ENCODE measurements at regions of chr10 and their contacts with region 1.

Region 1: DNA sequence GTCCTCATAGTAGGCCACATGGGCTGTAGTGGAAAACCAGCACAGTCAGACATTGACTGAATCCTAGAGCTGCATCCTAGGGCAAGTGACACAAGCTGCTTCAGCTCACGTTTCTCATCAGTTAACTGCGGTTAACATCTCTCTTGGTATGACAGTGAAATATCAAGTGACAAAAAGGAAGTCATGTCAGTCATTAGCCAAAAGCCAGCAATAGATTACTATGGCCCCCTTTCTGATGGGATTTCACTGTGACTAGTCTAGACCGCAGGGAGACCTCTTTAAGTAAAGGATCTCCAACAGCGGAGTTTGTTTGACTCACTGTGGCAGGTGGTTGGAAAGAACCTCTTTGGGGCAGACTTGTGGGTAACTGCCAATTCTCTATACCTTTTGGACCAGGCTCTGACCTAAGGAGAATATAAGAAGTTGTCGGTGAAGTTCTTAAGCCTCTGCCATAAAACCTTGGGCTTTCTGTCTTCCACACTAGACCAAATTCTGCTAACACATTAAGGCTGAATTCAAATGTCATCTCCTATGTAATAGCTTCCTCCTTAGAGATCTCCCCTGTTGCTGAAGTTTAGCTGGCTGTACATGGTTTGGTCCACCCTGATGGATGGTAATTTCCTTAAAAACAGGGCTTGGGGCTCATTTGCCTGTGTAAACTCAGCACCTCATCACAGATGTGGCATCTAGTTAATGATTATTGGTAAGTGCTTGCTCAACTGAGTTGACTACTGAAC is 115.3 kb downstream of the SGMS1 start:
- DNase-seq: peak; percentile 99
- ATAC-seq: peak; percentile 75
- H3K4me3 ChIP-seq: peak overlapping the region; percentile 4; the same call in 1 of the 2 replicates
- H3K27ac ChIP-seq: peak overlapping the region; percentile 80
- H3K4me1 ChIP-seq: peaks cover 68% of the 10 kb centered on the region
- H3K27me3 ChIP-seq: no peaks in the 10 kb centered on the region
- CTCF ChIP-seq: no peak
- EP300 ChIP-seq: peak; percentile 99 to 100
- POLR2A ChIP-seq: no peak
- RAD21 ChIP-seq: peak; percentile 27; the same call in 1 of the 2 replicates

Region 2: GRCh38 chr10:49242604-49243003 is 1265.9 kb before region 1 on chr10:
- CTCF ChIA-PET with region 1: no interaction called
- POLR2A ChIA-PET with region 1: no interaction called
- RAD21 ChIA-PET with region 1: no interaction called
- SMC1A ChIA-PET with region 1: no interaction called
- in situ Hi-C with region 1: no loop called
- intact Hi-C with region 1: no loop called
- DNase-seq: no peak
- ATAC-seq: no peak
- H3K4me3 ChIP-seq: no peak overlapping the region
- H3K27ac ChIP-seq: no peak overlapping the region
- H3K4me1 ChIP-seq: no peaks in the 10 kb centered on the region
- H3K27me3 ChIP-seq: peaks cover 0 to 2% of the 10 kb centered on the region in 2 experiments; a peak in 1 of 4 replicates
- CTCF ChIP-seq: no peak
- EP300 ChIP-seq: no peak
- POLR2A ChIP-seq: no peak
- RAD21 ChIP-seq: no peak

Region 3: DNA sequence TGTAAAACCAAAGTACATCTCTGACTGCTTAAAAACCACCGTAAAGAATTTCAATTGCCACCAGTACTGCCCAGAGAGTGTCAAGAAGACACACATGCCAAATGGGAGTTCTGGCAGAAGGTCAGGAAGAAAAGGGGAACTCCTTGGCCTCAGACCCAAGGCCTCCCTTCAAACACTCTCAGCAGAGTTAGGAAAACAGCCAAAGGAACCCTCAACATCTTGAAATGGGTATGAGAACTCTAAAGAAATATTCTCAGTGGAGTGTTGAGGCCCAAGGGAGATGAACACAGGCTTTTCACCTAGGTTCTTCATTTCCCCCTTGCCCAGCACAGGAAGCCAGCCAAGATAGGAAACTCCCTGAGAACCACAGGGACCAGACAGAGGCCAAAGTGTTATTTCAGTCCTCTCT is 161.1 kb before region 1 on chr10:
- CTCF ChIA-PET with region 1: no interaction called
- POLR2A ChIA-PET with region 1: no interaction called
- RAD21 ChIA-PET with region 1: interaction called, 4 read pairs
- SMC1A ChIA-PET with region 1: interaction called, 6 read pairs
- in situ Hi-C with region 1: no loop called
- intact Hi-C with region 1: loop called (anchors 5 kb)
- DNase-seq: peak; percentile 89
- ATAC-seq: peak; percentile 96
- H3K4me3 ChIP-seq: no peak overlapping the region
- H3K27ac ChIP-seq: peak overlapping the region; percentile 75
- H3K4me1 ChIP-seq: peaks cover 3% of the 10 kb centered on the region; the same call in 1 of the 2 replicates
- H3K27me3 ChIP-seq: no peaks in the 10 kb centered on the region
- CTCF ChIP-seq: no peak
- EP300 ChIP-seq: peak; percentile 36 to 50; a peak in 1 of 4 replicates
- POLR2A ChIP-seq: no peak
- RAD21 ChIP-seq: no peak

Region 4: GRCh38 chr10:50431791-50432190 is 76.7 kb before region 1 on chr10:
- CTCF ChIA-PET with region 1: interaction called, 8 read pairs
- POLR2A ChIA-PET with region 1: interaction called, 8 read pairs
- RAD21 ChIA-PET with region 1: interaction called, 18 read pairs
- SMC1A ChIA-PET with region 1: interaction called, 33 read pairs
- in situ Hi-C with region 1: loop called (anchors 5 kb)
- intact Hi-C with region 1: loop called (anchors 1 kb)
- DNase-seq: peak; percentile 96
- ATAC-seq: peak; percentile 89
- H3K4me3 ChIP-seq: peak overlapping the region; percentile 45; the same call in 1 of the 2 replicates
- H3K27ac ChIP-seq: peak overlapping the region; percentile 80; the same call in 1 of the 2 replicates
- H3K4me1 ChIP-seq: peaks cover 25% of the 10 kb centered on the region
- H3K27me3 ChIP-seq: no peaks in the 10 kb centered on the region
- CTCF ChIP-seq: no peak
- EP300 ChIP-seq: peak; percentile 99
- POLR2A ChIP-seq: no peak
- RAD21 ChIP-seq: no peak; the same call in 1 of the 2 replicates

Region 5: GRCh38 chr10:50470345-50470744 is 38.1 kb before region 1 on chr10:
- CTCF ChIA-PET with region 1: interaction called, 8 read pairs
- POLR2A ChIA-PET with region 1: interaction called, 4 read pairs
- RAD21 ChIA-PET with region 1: interaction called, 9 read pairs
- SMC1A ChIA-PET with region 1: interaction called, 38 read pairs
- in situ Hi-C with region 1: no loop called
- intact Hi-C with region 1: no loop called
- DNase-seq: no peak
- ATAC-seq: peak; percentile 75
- H3K4me3 ChIP-seq: no peak overlapping the region
- H3K27ac ChIP-seq: peak overlapping the region; percentile 51
- H3K4me1 ChIP-seq: peaks cover 45% of the 10 kb centered on the region
- H3K27me3 ChIP-seq: no peaks in the 10 kb centered on the region
- CTCF ChIP-seq: no peak
- EP300 ChIP-seq: no peak
- POLR2A ChIP-seq: no peak
- RAD21 ChIP-seq: no peak

Region 6: GRCh38 chr10:50522908-50523307 is 14.4 kb after region 1 on chr10:
- CTCF ChIA-PET with region 1: interaction called, 12 read pairs
- POLR2A ChIA-PET with region 1: interaction called, 4 read pairs
- RAD21 ChIA-PET with region 1: interaction called, 5 read pairs
- SMC1A ChIA-PET with region 1: interaction called, 13 read pairs
- in situ Hi-C with region 1: no loop called
- intact Hi-C with region 1: no loop called
- DNase-seq: no peak
- ATAC-seq: no peak
- H3K4me3 ChIP-seq: no peak overlapping the region
- H3K27ac ChIP-seq: no peak overlapping the region
- H3K4me1 ChIP-seq: no peaks in the 10 kb centered on the region
- H3K27me3 ChIP-seq: no peaks in the 10 kb centered on the region
- CTCF ChIP-seq: no peak
- EP300 ChIP-seq: no peak
- POLR2A ChIP-seq: no peak
- RAD21 ChIP-seq: no peak

Region 7: DNA sequence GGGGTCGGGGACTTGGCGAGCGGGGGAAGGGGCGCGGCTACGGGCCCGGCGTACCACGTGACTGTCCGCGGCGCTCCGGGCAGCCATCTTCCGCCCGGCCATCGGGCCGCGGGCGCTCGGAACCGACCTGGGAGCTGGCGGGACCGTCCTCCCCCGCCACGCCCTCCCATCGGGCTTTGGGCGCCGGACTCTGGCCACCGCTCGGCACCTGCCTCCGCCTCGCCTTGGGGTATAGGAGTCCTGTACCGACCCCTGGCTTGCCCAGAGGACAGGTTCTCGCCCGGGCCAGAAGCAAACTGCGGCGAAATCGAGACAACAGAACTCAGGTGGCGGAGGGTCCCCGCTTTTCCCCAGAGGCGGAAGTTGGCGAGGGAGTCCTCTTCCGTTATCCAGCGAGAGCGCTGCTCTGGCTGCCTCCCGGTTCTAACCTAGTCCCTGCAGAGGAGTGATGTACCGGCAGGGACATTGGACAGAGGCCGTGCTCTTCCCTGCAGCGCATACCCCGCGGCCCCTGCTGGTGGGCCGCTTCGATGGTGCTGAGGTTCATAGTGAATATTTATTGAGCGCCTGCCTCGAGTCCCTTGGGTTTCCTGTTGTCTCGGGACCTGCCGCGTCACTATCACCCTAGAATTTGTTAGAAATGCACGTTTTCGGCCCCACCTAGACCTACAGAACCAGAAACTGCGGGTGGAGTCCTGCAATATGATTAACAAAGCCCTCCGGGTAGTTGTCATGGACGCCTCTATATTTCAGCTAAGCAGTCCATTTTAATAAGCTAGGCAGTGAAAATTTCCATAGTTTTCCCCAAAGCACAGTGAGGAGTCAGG is 116.6 kb after region 1 on chr10:
- CTCF ChIA-PET with region 1: interaction called, 11 read pairs
- POLR2A ChIA-PET with region 1: interaction called, 10 read pairs
- RAD21 ChIA-PET with region 1: interaction called, 22 read pairs
- SMC1A ChIA-PET with region 1: interaction called, 45 read pairs
- in situ Hi-C with region 1: no loop called
- intact Hi-C with region 1: loop called (anchors 2 kb)
- DNase-seq: no peak
- ATAC-seq: peak; percentile 69
- H3K4me3 ChIP-seq: peak overlapping the region; percentile 86
- H3K27ac ChIP-seq: peak overlapping the region; percentile 94
- H3K4me1 ChIP-seq: no peaks in the 10 kb centered on the region
- H3K27me3 ChIP-seq: no peaks in the 10 kb centered on the region
- CTCF ChIP-seq: peak; percentile 52 to 70 (median 56)
- EP300 ChIP-seq: no peak
- POLR2A ChIP-seq: peak; percentile 89
- RAD21 ChIP-seq: peak; percentile 52